K562 (cell line): ENCODE measurements at regions of chr16 and their contacts with region 1.

Region 1: DNA sequence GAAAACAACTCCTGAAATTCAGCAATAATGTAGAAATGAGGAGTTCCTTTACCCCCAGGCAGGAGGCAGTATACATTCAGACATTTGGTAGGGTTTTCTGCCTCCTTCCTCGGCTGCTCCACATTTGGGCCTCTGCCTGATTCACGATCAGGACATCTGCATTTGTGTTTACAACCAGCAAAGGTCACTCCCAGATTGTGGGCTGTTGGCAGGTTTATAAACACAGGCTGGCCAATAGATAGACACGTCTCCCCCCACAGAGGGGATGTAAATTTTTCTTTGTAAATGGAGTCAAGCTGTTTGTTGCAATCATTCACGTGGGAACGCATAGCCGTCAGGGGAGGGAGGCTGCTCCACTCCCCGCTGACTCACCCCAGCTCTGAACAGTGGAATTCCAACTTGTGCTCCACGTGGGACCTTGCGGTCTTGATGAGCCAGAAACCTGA is 252.1 kb upstream of the N4BP1 start:
- DNase-seq: peak in 1 of 4 experiments; percentile 14
- ATAC-seq: 0 out of 3 replicates have a peak, but pooled peaks have one; percentile 22
- H3K4me3 ChIP-seq: no peak overlapping the region
- H3K27ac ChIP-seq: no peak overlapping the region
- H3K4me1 ChIP-seq: no peaks in the 10 kb centered on the region
- H3K27me3 ChIP-seq: no peaks in the 10 kb centered on the region
- CTCF ChIP-seq: peak in 2 of 3 experiments; percentile 18 to 32; a peak in 2 of 6 replicates
- EP300 ChIP-seq: no peak
- POLR2A ChIP-seq: no peak
- RAD21 ChIP-seq: 0 out of 4 replicates have a peak, but pooled peaks of 1 of the 2 experiments have one; percentile 3

Region 2: GRCh38 chr16:49350265-49351095 is 488.4 kb after region 1 on chr16:
- CTCF ChIA-PET with region 1: no interaction called
- POLR2A ChIA-PET with region 1: no interaction called
- in situ Hi-C with region 1: no loop called
- intact Hi-C with region 1: loop called (anchors 5 kb)
- DNase-seq: peak; percentile 67 to 78 (median 76)
- ATAC-seq: peak; percentile 91
- H3K4me3 ChIP-seq: no peak overlapping the region
- H3K27ac ChIP-seq: no peak overlapping the region
- H3K4me1 ChIP-seq: no peaks in the 10 kb centered on the region
- H3K27me3 ChIP-seq: peaks cover 0 to 3% of the 10 kb centered on the region in 2 experiments; a peak in 1 of 5 replicates
- CTCF ChIP-seq: peak; percentile 81 to 82 (median 82)
- EP300 ChIP-seq: no peak
- POLR2A ChIP-seq: no peak
- RAD21 ChIP-seq: peak; percentile 60 to 79